Naive thymus-derived CD8-positive, alpha-beta T cell (primary cell): ENCODE measurements at regions of chr22 and their contacts with region 1.

Region 1: GRCh38 chr22:19479357-19480172 is at the start of gene CDC45:
- DNase-seq: peak; percentile 79 to 98 (median 93)
- ATAC-seq: peak; percentile 91 to 92
- H3K4me3 Mint-ChIP-seq: peak within 1 kb of the TSS; percentile 92 to 98 (median 96)
- H3K27ac Mint-ChIP-seq: peak within 1 kb of the TSS; percentile 98 to 100 (median 100)
- H3K4me1 Mint-ChIP-seq: peaks cover 19 to 33% (median 33%) of the 10 kb centered on the region in 4 donors
- H3K27me3 Mint-ChIP-seq: no peaks in the 10 kb centered on the region
- polyA plus RNA-seq, gene CDC45: 1.2 to 2.7 TPM in 2 of 3 donors, not detected in the other

Region 2: DNA sequence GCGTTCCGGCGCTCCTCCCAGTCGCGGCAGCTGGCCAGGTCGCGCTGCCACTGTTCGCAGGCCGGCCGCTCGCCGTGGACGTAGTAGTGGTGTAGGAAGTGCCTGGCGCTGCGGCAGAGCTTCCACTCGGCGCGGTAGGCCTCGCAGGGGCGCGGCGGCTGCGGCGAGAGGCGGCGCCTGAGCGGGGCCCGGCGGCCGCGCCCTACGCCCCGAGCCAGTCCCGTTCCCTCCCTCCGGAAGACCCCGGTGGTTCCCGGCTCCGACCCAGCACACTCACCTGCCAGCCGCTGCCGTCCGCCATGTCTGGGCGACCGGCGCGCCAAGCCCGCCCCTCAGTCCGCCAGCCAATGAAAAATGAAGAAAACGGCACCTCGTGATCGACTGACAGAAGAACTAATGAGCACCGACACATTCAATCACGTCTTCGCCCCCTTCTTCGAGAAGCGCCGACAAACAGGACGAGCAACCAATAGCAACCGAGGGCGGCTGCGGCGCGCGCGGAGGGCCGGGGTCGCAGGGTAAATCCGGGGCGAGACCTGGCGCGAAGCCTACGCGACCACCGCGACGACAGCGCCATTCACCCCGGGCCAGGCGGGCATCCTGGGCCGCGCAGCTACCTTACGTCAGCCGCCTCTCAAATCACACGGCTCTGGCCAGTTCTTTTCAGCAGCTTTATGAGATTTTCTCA is 32.0 kb before region 1 on chr22 and contains the start of gene C22orf39:
- POLR2A ChIA-PET with region 1: interaction called, 16 read pairs
- DNase-seq: peak; percentile 77 to 94 (median 88)
- ATAC-seq: peak; percentile 91 to 92
- H3K4me3 Mint-ChIP-seq: peak within 1 kb of the TSS; percentile 88 to 98 (median 94)
- H3K27ac Mint-ChIP-seq: peak within 1 kb of the TSS; percentile 87 to 99 (median 96)
- H3K4me1 Mint-ChIP-seq: peaks cover 18 to 54% (median 45%) of the 10 kb centered on the region in 4 donors
- H3K27me3 Mint-ChIP-seq: no peaks in the 10 kb centered on the region
- polyA plus RNA-seq, gene C22orf39: 51.9 to 58.7 (median 58.0) TPM

Region 3: DNA sequence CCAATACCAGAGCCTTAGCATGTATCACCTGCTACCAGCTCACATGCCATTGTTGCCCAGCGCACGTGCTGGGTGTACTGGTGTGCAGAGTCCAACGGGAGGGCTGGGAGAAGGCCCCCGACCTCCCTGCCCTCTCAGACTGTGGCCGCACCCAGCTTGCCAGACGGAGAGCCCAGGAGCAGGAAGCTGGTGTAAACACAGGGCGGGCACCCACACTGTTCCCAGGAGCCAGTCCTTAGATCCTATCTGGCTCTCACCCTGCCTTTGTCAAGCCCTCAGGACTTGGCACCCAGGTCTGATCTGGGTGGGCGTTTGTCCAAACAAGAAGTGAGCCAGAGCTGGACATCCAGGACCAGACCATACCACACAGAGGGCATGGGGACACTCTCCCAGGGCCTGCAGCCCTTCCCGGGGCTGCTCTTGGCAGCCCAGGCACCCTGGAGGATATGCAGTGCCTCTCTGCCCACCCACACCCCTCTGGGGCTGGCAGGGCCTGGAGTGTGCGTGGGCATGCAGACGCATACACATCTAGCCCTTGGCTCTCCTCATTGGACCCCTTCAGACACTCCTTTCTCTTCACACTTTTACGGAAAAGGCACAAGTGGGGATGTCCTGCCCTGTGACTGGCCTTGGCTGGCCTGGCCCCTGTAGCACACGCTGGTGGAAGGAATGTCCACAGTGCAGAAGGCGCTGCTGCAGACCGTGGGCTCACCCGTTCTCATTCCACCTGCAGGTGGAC is 64.6 kb after region 1 on chr22:
- POLR2A ChIA-PET with region 1: no interaction called
- DNase-seq: no peak
- ATAC-seq: no peak
- H3K4me3 Mint-ChIP-seq: no peak overlapping the region
- H3K27ac Mint-ChIP-seq: peak overlapping the region in 2 of 10 donors; percentile 40 to 61
- H3K4me1 Mint-ChIP-seq: no peaks in the 10 kb centered on the region
- H3K27me3 Mint-ChIP-seq: peaks cover 0 to 2% (median 0%) of the 10 kb centered on the region in 5 donors